Activated T-helper 1 cell treated with anti-CD3 and anti-CD28 coated beads, Interleukin-12 subunit alpha, Interleukin-12 subunit beta, Interleukin-2, Interleukin-4 antibody, amounts not matched to agents 30 ng/mL and 10 ng/mL and 1 ng/mL, durations not matched to agents 14 hours and 24 hours and 36 hours (primary cell): ENCODE measurements at regions of chr1 and their contacts with region 1.

Region 1: DNA sequence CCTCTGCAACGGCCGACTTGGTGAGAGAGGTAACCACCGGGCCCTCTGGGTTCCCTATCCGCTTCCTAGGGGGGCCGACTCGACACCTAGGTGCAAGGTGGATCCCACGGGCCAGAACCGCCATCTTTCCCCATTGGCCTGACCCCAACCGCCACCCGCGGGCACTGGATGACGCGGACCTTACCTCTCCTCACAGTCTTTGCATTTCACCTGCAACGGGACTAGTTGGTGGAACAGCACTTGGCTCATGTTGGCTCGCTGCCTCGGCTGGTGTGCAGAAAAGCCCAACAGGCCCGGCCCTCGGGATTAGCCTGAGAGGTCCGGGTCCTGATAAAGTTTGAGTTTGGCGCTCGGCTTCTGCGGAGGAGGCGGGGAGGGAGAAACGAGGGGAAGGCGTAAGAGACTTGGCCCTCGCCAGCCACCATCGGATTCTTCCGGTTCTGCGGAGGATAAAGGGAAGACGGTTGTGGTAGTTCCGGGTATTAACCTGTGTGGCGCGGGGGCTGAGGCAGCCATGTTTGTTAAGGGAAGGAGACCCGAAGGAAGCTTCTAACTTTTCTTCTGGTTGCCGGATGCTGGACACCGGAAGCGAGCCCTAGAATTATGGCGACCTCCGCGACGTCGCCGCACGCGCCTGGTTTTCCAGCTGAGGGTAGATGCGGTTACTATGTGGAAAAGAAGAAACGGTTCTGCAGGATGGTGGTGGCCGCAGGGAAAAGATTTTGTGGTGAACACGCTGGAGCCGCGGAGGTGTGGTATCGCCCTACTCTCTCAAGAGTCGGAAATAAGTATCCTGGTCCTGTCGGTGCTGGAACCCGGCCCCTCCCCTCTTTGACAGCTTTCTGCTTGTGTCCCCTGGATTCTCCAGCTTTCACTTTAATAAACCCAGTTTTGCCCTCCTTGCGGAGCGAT is at the starts of genes SASS6 and TRMT13:
- DNase-seq: peak; percentile 93
- H3K4me3 Mint-ChIP-seq: peak within 1 kb of the TSS; percentile 99
- H3K27ac Mint-ChIP-seq: peak within 1 kb of the TSS; percentile 98
- H3K4me1 Mint-ChIP-seq: peaks cover 56% of the 10 kb centered on the region
- H3K27me3 Mint-ChIP-seq: no peaks in the 10 kb centered on the region
- total RNA-seq, gene SASS6: 16.4 and 16.7 TPM in 2 replicates
- total RNA-seq, gene TRMT13: 21.8 and 25.0 TPM in 2 replicates

Region 2: GRCh38 chr1:99849744-99850458 is 282.9 kb before region 1 on chr1 and contains the start of gene AGL:
- intact Hi-C with region 1: loop called (anchors 1 kb)
- DNase-seq: peak; percentile 80
- H3K4me3 Mint-ChIP-seq: peak within 1 kb of the TSS; percentile 92
- H3K27ac Mint-ChIP-seq: peak within 1 kb of the TSS; percentile 86
- H3K4me1 Mint-ChIP-seq: peaks cover 17% of the 10 kb centered on the region
- H3K27me3 Mint-ChIP-seq: peaks cover 6% of the 10 kb centered on the region
- total RNA-seq, gene AGL: 10.7 and 10.8 TPM in 2 replicates

Region 3: GRCh38 chr1:99943223-99943794 is 189.5 kb before region 1 on chr1:
- intact Hi-C with region 1: no loop called
- DNase-seq: no peak
- H3K4me3 Mint-ChIP-seq: no peak overlapping the region
- H3K27ac Mint-ChIP-seq: no peak overlapping the region
- H3K4me1 Mint-ChIP-seq: no peaks in the 10 kb centered on the region
- H3K27me3 Mint-ChIP-seq: peaks cover 3% of the 10 kb centered on the region

Region 4: DNA sequence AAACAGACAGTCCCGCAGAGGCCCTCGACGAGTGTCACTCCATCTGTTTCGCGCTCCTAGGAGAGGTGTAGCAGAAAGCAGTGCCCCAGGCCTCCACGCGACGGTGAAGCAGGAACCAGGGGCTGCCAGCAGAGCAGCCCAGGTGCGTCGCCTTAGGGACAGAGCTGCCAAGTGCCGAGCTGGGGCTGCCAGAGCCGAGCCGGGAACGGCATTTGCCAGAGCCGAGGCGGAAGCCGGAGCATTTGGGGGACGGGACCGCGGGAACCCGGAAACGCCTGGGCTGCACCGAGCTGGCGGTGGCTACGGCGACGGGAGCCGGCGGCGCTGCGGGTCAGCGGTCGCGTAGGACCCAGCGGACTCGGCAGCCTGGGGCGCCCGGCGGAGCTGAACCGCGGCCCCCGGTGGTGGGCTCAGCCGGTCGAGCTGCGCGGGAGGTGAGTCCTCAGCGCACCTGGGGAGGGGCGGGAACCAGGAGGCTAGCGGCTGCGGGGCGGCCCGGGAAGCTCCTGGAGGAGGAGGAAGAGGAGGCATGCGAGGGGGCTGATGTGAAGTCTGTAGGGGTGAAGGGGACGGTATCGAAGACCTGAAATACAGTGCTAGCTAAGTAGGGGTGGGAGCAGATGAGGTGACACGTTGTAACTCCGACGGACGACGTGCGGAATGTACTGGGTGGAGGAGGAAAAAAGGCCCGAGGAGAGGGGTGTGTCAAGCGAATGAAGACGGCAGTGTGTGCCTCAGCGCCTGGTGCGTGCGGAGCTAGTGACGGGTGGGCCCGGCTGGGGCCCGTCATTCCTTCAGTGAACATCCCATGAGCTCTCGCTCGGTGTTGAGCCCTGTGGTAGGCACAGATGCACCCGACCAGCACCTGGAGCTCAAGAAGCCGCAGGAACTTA is 162.8 kb before region 1 on chr1 and contains the start of gene SLC35A3:
- intact Hi-C with region 1: loop called (anchors 1 kb)
- DNase-seq: peak; percentile 73
- H3K4me3 Mint-ChIP-seq: peak within 1 kb of the TSS; percentile 99
- H3K27ac Mint-ChIP-seq: peak within 1 kb of the TSS; percentile 95
- H3K4me1 Mint-ChIP-seq: peaks cover 22% of the 10 kb centered on the region
- H3K27me3 Mint-ChIP-seq: no peaks in the 10 kb centered on the region
- total RNA-seq, gene SLC35A3: 16.0 and 16.3 TPM in 2 replicates

Region 5: GRCh38 chr1:100028765-100029164 is 104.1 kb before region 1 on chr1:
- intact Hi-C with region 1: no loop called
- DNase-seq: no peak
- H3K4me3 Mint-ChIP-seq: no peak overlapping the region
- H3K27ac Mint-ChIP-seq: peak overlapping the region; percentile 36
- H3K4me1 Mint-ChIP-seq: peaks cover 9% of the 10 kb centered on the region
- H3K27me3 Mint-ChIP-seq: no peaks in the 10 kb centered on the region

Region 6: GRCh38 chr1:100122177-100122576 is 10.6 kb before region 1 on chr1:
- intact Hi-C with region 1: no loop called
- DNase-seq: no peak
- H3K4me3 Mint-ChIP-seq: no peak overlapping the region
- H3K27ac Mint-ChIP-seq: no peak overlapping the region
- H3K4me1 Mint-ChIP-seq: peaks cover 5% of the 10 kb centered on the region
- H3K27me3 Mint-ChIP-seq: no peaks in the 10 kb centered on the region

Region 7: DNA sequence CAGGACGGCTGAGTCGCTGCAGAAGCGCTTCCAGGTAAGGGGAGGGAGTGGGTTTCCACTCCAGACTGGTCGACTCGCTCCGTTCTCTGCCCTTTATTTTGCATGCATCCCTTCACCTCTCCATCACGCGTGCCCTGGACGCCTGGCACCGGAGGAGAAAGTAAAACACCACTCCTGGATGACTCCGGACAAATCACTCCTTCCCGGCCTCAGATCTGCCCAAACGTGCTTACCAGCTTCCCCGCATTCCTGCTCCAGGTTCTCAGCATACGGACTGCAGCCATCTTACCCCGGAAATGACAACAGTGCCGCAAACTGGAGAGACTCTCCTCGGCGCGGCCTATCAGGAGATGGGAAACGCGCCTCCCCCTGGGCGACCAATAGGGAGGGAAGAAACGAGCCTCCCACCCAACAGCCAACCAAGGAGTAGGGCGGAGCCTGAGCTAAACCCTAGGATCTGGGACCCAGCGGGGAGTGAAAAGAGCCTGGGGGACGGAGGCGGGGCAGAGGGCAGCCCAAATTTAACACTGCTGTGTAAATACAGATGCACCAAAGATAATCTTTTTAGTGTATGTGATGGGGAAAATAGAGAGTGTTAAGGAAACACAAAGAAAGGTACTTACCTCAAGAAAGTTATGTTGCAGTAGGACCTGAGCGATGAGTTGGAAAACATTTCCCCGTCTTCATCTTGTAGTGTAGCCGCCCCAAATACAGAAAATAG is 116.9 kb after region 1 on chr1 and contains the start of gene DBT:
- intact Hi-C with region 1: loop called (anchors 1 kb)
- DNase-seq: peak; percentile 92
- H3K4me3 Mint-ChIP-seq: no peak within 1 kb of the TSS
- H3K27ac Mint-ChIP-seq: no peak within 1 kb of the TSS
- H3K4me1 Mint-ChIP-seq: peaks cover 10% of the 10 kb centered on the region
- H3K27me3 Mint-ChIP-seq: peaks cover 12% of the 10 kb centered on the region
- total RNA-seq, gene DBT: 11.3 and 11.7 TPM in 2 replicates

Region 8: DNA sequence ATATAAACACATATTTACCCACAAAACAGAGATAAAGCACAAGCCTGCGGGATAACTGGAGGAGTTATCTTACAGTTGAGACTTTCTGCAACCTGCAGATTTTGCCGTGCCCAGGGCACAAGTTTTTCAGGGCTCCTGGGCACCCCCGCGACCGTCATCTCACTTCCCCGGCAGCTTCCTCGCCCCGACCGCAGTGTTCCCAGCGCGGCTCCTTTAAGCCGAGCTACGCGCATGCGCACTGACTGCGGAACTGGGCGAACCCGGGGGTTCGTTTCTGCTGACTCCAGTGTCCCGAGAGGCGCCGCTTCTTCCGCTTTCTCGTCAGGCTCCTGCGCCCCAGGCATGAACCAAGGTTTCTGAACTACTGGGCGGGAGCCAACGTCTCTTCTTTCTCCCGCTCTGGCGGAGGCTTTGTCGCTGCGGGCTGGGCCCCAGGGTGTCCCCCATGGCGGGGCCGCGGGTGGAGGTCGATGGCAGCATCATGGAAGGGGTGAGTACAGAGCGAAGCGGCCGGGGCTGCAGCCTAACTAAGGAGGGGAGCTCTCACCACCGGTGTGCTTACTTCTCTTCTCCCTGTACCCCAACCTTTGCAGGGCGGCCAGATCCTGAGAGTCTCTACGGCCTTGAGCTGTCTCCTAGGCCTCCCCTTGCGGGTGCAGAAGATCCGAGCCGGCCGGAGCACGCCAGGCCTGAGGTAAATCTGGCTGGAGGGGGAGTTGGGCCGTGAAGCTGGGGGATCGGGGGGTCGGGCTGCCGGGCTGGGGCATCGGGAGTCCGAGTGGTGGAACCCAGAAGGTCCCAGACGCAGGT is 133.3 kb after region 1 on chr1 and contains the start of gene RTCA:
- intact Hi-C with region 1: loop called (anchors 1 kb)
- DNase-seq: peak; percentile 94
- H3K4me3 Mint-ChIP-seq: peak within 1 kb of the TSS; percentile 100
- H3K27ac Mint-ChIP-seq: peak within 1 kb of the TSS; percentile 100
- H3K4me1 Mint-ChIP-seq: peaks cover 50% of the 10 kb centered on the region
- H3K27me3 Mint-ChIP-seq: peaks cover 4% of the 10 kb centered on the region
- total RNA-seq, gene RTCA: 48.1 and 52.0 TPM in 2 replicates

Region 9: GRCh38 chr1:100377590-100378361 is 245.0 kb after region 1 on chr1:
- intact Hi-C with region 1: loop called (anchors 5 kb)
- DNase-seq: no peak
- H3K4me3 Mint-ChIP-seq: peak overlapping the region; percentile 38
- H3K27ac Mint-ChIP-seq: peak overlapping the region; percentile 75
- H3K4me1 Mint-ChIP-seq: peaks cover 55% of the 10 kb centered on the region
- H3K27me3 Mint-ChIP-seq: peaks cover 2% of the 10 kb centered on the region

Region 10: GRCh38 chr1:100443811-100444571 is 311.2 kb after region 1 on chr1:
- intact Hi-C with region 1: loop called (anchors 2 kb)
- DNase-seq: peak; percentile 22
- H3K4me3 Mint-ChIP-seq: peak overlapping the region; percentile 61
- H3K27ac Mint-ChIP-seq: peak overlapping the region; percentile 95
- H3K4me1 Mint-ChIP-seq: peaks cover 91% of the 10 kb centered on the region
- H3K27me3 Mint-ChIP-seq: no peaks in the 10 kb centered on the region